ENCODE measurements at regions of chr3 and their contacts with region 1.

Region 1: DNA sequence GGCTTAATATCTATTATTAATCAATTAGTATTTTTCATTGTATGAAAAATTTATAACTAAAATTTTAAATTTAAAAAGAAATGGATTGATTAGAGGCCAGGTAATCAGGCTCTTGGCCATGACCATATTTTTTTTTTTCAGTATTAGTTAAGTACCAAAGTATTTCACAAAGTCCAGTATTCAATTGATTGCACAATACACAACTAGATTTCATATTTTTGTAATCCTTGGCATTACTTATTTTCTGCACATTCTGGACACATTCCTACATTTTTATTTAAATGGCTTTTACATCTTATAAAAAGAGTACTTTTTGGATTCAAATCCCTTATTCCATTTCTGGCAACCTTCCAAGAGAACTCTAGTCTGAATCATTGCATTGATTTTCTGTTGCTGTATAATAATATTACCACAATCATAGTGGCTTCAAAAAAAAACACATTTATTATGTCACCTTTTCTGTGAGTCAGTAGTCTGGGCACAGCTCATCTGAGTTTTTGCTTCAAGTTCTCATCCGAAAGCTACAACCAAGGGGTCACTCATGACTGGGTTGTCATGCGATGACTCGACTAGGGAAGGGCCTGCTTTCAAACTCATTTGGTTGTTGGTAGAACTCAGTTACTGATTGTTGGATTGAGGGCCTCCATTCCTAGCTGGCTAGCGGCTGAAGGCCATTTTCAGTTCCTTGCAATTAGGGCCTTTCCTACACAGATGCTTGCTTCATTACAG is 90.7 kb downstream of the CNTN6 start:
- DNase-seq: peak; percentile 50
- H3K4me3 Mint-ChIP-seq: no peak overlapping the region
- H3K27ac Mint-ChIP-seq: no peak overlapping the region
- H3K4me1 Mint-ChIP-seq: no peaks in the 10 kb centered on the region
- H3K27me3 Mint-ChIP-seq: no peaks in the 10 kb centered on the region
- CTCF ChIP-seq: no peak

Region 2: DNA sequence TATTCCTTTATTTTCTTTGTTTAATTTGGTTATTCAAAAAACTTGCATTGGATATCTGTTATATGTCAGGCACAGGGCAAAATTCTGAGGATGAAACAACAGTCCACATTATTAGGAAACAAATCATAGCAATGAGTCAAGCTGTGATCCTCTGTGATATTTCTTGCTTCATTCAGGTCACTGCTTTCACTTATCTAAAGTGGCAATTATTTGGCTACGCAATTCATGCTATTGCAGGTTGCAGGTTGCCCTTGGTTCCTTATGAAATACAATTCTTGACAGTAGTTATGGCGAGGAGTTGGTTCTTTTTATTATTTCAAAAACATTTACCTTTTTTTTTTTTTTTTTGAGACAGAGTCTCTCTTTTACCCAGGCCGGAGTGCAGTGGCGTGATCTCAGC is 157.1 kb before region 1 on chr3:
- CTCF ChIA-PET with region 1: no interaction called
- intact Hi-C with region 1: no loop called
- DNase-seq: no peak
- H3K4me3 Mint-ChIP-seq: no peak overlapping the region
- H3K27ac Mint-ChIP-seq: no peak overlapping the region
- H3K4me1 Mint-ChIP-seq: no peaks in the 10 kb centered on the region
- H3K27me3 Mint-ChIP-seq: no peaks in the 10 kb centered on the region
- CTCF ChIP-seq: no peak

Region 3: DNA sequence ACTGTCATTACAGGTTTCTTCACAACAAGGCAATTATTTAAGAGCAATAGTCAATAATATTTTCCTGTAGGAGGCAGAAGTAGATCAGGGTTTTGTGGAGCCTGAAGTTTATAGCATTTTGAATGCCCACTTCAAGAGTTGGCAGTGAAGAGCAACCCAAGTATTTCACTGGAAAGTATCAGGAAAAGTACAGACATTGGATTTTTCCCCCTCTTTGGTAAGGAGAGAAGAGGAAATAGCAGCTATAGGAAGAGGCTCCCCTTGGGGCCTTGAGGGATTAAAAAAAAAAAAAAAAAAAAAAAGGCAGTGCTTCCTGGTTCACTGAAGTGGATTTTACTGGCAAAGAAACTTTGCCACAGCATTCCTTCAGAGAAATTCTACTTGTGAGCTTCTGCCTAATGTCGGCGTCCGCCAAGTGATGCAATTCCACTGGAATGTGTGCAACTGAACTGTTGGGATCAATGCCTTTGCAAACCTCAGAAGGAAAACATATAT is 96.4 kb before region 1 on chr3:
- CTCF ChIA-PET with region 1: interaction called, 10 read pairs
- intact Hi-C with region 1: loop called (anchors 5 kb)
- DNase-seq: peak; percentile 61
- H3K4me3 Mint-ChIP-seq: no peak overlapping the region
- H3K27ac Mint-ChIP-seq: peak overlapping the region; percentile 100
- H3K4me1 Mint-ChIP-seq: peaks cover 14% of the 10 kb centered on the region
- H3K27me3 Mint-ChIP-seq: no peaks in the 10 kb centered on the region
- CTCF ChIP-seq: no peak

Region 4: DNA sequence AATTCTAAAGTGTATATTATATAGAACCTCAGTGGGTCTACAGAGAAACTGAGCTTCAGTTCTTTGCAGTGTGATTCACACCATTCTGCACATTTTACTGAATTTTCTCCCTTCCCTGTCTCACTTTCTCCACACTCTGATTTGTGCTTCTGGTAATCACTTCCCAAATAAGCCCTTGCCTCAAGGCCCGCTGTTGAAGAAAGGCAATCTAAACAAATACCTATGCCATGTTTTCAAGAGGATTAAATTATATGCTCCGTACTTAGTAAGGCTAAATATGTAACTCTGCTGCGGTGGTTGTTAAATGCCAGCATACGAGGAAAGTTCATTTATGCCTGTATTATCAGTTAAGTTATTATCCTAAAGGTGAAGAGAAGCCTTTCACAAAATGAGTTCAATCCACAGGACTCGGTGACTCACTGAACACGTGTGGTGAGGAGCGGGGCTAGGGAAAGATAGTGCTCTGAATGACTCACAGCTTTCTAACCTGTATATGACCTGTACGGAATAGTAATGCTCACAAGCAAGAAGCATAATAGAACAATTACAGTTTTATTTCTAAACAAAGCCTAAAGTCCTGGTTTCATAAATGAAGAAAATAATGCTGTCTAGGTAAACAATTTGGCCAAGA is 65.5 kb before region 1 on chr3:
- CTCF ChIA-PET with region 1: no interaction called
- intact Hi-C with region 1: no loop called
- DNase-seq: peak; percentile 62
- H3K4me3 Mint-ChIP-seq: no peak overlapping the region
- H3K27ac Mint-ChIP-seq: peak overlapping the region; percentile 80
- H3K4me1 Mint-ChIP-seq: peaks cover 20% of the 10 kb centered on the region
- H3K27me3 Mint-ChIP-seq: no peaks in the 10 kb centered on the region
- CTCF ChIP-seq: no peak

Region 5: GRCh38 chr3:1275495-1275894 is 92.0 kb after region 1 on chr3:
- CTCF ChIA-PET with region 1: no interaction called
- intact Hi-C with region 1: no loop called
- DNase-seq: peak; percentile 7
- H3K4me3 Mint-ChIP-seq: no peak overlapping the region
- H3K27ac Mint-ChIP-seq: no peak overlapping the region
- H3K4me1 Mint-ChIP-seq: no peaks in the 10 kb centered on the region
- H3K27me3 Mint-ChIP-seq: no peaks in the 10 kb centered on the region
- CTCF ChIP-seq: no peak